Activated CD8-positive, alpha-beta T cell treated with anti-CD3 and anti-CD28 coated beads for 36 hours (primary cell): ENCODE measurements at regions of chr1 and their contacts with region 1.

Region 1: DNA sequence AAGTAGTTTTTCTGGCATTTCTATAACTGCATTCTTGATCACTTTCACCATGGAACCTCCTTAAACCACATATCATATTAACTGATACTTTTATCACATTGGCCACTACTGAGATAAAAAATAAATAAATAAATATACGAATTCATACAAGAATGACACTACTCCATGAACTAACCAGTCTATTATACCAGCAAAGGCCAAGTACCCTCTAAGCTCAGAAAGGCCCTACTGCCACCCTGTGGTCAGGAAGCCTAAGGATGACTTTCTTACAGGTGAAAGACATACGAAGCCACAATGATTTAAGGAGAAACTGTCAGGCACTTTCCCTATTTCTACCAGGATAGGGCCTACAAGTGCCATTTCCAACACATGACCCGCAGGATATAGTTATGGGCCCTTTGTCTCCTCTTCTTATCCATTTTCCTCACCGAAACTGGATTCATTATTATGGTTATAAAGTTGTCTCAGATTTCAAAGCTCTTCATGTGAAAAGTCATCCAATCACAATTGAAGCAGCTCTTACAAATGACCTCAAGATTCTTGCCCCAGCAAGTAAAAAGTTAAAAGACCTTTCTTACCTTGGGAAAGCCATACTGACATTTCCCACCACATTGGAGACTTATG is 23.9 kb downstream of the DNAJC8 start:
- DNase-seq: peak; percentile 82
- ATAC-seq: peak; percentile 88
- H3K4me3 Mint-ChIP-seq: no peak overlapping the region
- H3K27ac Mint-ChIP-seq: no peak overlapping the region
- H3K4me1 Mint-ChIP-seq: peaks cover 3% of the 10 kb centered on the region
- H3K27me3 Mint-ChIP-seq: no peaks in the 10 kb centered on the region
- CTCF ChIP-seq: peak; percentile 81

Region 2: GRCh38 chr1:28078680-28079626 is 130.0 kb before region 1 on chr1:
- CTCF ChIA-PET with region 1: interaction called, 12 read pairs
- POLR2A ChIA-PET with region 1: no interaction called
- intact Hi-C with region 1: no loop called
- DNase-seq: no peak
- ATAC-seq: no peak
- H3K4me3 Mint-ChIP-seq: no peak overlapping the region
- H3K27ac Mint-ChIP-seq: no peak overlapping the region
- H3K4me1 Mint-ChIP-seq: peaks cover 33% of the 10 kb centered on the region
- H3K27me3 Mint-ChIP-seq: no peaks in the 10 kb centered on the region
- CTCF ChIP-seq: no peak